ENCODE measurements at regions of chr20 and their contacts with region 1.

Region 1: GRCh38 chr20:50790651-50791277 is 4.1 kb upstream of the BCAS4 start:
- DNase-seq: peak; percentile 98
- H3K27ac ChIP-seq: peak overlapping the region; percentile 85
- CTCF ChIP-seq: peak; percentile 99

Region 2: DNA sequence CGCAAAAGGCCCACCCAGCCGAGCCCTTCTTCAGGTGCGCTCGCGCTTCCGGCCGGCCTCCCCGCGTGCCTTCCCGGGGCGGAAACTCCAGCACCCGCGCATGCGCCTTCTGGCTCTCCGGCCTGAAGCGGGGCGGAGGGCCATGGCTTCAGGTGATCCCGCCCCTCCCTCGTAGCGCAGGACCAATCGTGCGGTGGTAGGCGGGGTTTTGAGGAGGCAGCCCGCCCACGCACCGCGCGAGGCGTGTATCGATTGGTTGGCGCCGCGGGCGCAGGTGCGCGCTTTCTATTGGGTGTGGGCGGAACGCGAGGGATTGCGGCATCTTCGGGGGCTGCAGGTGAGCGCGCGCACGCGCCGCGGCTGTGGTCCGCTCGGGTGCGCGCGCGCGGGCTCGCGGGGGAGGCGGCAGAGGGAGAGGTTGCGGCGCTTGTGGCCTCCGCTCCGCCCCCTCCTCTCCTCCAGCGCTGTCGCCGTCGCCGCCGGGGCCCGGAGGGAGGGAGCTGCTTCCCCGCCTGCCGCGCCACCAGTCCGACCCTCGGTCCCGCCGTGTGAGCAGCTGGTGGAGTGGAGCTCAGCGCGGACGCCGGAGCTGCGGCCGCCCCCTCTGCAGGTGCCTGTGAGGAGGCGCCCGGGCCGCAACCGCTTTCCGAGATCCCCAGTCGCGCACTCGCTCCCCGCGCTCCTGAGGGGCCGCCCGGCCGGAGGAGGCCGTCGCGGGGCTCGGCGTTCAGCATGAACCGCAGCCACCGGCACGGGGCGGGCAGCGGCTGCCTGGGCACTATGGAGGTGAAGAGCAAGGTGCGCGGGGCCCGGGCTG is 59.5 kb before region 1 on chr20 and contains the start of gene PARD6B:
- CTCF ChIA-PET with region 1: no interaction called
- POLR2A ChIA-PET with region 1: no interaction called
- DNase-seq: peak; percentile 100
- H3K27ac ChIP-seq: peak within 1 kb of the TSS; percentile 79
- CTCF ChIP-seq: no peak

Region 3: GRCh38 chr20:50750145-50750671 is 40.6 kb before region 1 on chr20:
- CTCF ChIA-PET with region 1: interaction called, 10 read pairs
- POLR2A ChIA-PET with region 1: no interaction called
- DNase-seq: no peak
- H3K27ac ChIP-seq: no peak overlapping the region
- CTCF ChIP-seq: no peak

Region 4: DNA sequence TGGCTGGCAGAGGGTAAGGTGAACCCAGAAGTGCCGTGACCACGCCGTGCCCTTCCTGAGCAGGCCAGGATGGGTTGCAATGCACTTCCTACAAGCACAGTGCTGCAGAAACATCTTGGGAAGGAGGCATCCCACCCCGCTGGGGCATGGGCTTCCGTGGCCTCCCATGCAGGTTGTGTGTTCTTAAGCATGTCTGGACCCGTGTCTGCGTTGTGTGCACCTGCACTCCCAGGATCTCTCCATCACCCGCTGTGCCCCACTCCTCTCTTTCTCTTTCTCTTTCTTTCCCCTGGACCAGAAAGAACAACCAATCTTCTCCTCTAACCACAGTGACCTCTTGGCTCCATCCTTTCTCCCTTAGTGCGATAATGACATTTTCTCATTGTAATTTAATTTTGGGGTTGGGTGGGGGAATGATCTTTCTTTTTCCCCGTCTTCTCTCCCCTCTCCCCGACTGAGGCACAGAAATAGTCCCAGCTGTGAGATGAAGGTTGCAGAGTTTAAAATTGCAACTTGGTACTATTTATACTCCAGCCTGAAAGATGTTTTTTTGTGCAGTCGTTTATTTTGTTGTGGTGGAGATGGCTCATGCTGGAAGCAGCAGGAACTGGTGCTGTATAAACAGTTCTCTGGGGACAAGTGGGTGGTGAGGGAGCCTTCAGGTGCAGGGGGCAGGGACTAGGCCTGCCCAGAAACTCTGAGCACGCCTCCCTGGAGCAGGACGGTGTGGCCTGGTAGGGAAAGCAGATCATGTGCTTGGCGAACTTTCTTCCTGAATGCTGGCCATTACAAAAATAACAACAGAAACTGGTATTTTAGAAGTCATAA is 24.6 kb after region 1 on chr20:
- CTCF ChIA-PET with region 1: interaction called, 23 read pairs
- POLR2A ChIA-PET with region 1: no interaction called
- DNase-seq: no peak
- H3K27ac ChIP-seq: no peak overlapping the region
- CTCF ChIP-seq: no peak

Region 5: DNA sequence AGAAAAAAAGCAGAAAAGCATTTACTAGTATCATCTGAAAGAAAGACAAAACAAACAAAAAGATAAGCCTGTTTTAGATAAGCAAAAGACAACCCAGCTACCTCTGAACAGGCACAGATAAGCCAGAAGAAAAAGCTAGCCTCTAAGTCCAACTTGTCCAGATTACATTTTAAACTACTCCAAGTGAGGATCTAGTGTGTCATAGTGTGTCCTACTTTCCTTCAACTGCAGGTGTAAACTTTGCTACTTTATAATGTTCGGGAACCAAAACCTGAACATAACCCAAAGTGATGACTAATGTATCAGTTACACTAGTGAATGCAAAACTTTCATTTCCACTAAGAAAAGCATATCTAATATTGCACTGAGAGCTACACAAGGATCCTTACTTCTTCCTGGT is 121.0 kb after region 1 on chr20:
- CTCF ChIA-PET with region 1: interaction called, 21 read pairs
- POLR2A ChIA-PET with region 1: no interaction called
- DNase-seq: no peak
- H3K27ac ChIP-seq: no peak overlapping the region
- CTCF ChIP-seq: no peak

Region 6: GRCh38 chr20:50929299-50930138 is 138.8 kb after region 1 on chr20:
- CTCF ChIA-PET with region 1: interaction called, 58 read pairs
- POLR2A ChIA-PET with region 1: interaction called, 6 read pairs
- DNase-seq: peak; percentile 90
- H3K27ac ChIP-seq: peak overlapping the region; percentile 96
- CTCF ChIP-seq: peak; percentile 95

Region 7: DNA sequence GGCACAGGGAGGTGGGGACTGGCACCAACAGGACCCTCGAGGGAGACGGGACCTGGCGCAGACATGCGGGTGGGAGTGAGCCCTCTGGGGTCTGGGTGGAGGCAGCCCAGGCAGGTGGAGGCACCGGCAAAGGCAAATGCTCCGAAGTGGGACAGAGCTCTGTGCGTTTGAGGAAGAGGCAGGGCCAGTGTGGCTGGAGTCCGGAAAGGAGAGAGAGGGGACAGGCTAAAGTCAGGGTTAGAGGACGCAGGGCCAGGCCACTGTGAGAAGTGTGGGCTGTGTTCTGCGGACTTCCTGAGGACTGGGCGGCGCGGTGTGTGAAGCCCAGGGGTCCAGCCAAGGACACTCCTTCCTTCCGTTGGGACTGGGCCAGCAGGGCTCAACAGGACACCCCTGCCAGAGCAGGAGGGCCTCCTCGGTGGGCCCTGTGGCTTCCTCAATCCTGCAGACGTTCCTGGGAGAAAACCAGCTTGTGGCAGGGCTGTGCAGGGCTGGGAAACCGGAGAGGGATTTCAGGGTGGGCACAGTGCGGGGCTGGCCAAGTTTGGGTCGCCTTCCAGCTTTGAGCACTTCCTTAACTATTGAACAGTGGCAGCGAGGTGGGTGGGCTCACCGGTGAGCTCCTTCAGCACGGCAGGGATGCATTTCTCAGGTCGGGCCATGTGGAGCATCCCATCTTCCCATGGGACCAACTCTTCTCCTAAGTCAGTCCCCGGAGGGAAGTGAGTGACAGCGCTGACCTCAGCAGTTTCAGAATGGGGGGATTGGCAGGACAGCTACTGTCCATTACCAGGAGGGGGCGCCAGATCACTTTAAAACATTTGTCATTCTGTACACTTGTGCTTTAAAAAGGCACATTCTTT is 190.3 kb after region 1 on chr20:
- CTCF ChIA-PET with region 1: interaction called, 20 read pairs
- POLR2A ChIA-PET with region 1: no interaction called
- DNase-seq: peak; percentile 64
- H3K27ac ChIP-seq: peak overlapping the region; percentile 87
- CTCF ChIP-seq: peak; percentile 85; the same call in 1 of the 2 replicates

Region 8: DNA sequence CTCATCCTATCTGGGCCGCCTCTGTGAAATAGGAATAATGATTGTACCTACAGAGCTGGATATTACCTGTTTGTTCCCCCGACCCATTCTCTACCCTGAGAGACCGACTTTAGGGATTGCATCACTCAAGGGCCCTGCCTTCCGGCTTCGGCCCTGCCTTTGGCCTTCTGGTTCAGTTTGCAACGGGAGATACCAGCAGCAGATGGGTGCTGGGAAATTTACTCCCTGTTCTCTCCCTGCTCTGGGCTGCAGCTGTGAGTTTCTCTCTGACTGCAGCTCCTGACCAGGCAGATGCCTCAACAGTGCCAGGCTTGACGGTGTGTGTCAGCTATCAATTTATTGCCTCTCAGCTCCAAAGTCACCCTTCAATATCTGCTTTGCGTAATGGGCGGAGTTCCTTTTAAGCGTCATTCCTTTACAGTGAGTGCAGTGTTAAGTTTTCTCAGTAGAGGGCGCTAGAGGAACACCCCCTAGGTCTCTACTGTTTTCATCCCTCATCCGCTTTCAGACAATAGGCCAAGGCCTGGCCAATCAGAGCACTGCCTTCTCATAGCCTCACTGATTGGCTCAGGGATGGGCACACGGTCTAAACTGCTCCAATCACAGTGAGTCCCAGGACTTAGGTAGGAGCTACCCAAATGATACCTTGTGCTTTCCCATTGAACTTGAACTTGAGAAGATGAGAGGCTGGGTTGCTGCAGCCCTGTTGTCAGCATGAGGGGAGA is 202.1 kb after region 1 on chr20:
- CTCF ChIA-PET with region 1: interaction called, 18 read pairs
- POLR2A ChIA-PET with region 1: interaction called, 4 read pairs
- DNase-seq: peak; percentile 99
- H3K27ac ChIP-seq: peak overlapping the region; percentile 98
- CTCF ChIP-seq: peak; percentile 98